Dorsolateral prefrontal cortex (tissue), 120 donors: ENCODE measurements at regions of chr12 and their contacts with region 1.

Region 1: GRCh38 chr12:74537707-74538385 is at the start of gene ATXN7L3B:
- DNase-seq: peak; percentile 81 to 95 (median 86)
- H3K4me3 ChIP-seq: peak within 1 kb of the TSS; percentile 65 to 100 (median 87)
- H3K27ac ChIP-seq: peak within 1 kb of the TSS; percentile 60 to 98 (median 94)
- H3K27me3 ChIP-seq: no peaks in the 10 kb centered on the region
- CTCF ChIP-seq: peak in 6 of 56 donors; percentile 3 to 12 (median 4)
- total RNA-seq, gene ATXN7L3B: 42.4 to 93.4 (median 69.5) TPM

Region 2: DNA sequence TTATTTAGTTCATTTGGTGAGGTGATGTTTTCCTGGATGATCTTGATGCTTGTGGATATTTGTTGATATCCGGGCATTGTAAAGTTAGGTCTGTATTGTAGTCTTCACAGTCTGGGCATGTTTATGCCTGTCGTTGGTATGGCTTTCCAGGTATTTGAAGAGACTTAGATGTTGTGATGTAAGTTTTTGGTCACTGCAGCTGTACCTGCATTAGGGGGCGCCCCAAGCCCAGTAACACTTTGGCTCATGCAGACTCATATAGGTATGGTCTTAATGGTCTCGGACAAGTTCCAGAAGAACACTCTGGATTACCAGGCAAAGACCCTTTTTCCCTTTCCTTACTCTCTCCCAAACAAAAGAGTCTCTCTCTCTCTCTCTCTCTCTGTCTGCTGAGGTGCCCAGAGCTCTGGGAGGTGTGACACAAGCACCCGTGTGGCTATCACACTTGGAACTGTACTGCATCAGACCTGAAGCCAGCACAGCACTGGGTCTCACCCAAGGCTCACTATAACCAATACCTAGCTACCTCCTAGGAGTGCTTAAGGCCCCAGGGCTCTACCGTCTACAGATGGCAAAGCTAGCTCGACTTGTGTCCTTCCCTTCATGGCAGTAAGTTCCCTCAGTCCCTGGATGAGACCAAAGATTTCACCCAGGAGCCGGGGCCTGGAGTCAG is 426.0 kb before region 1 on chr12:
- intact Hi-C with region 1: loop called in 1 of 2 experiments (anchors 10 kb)
- DNase-seq: peak in 4 of 10 donors; percentile 31 to 61 (median 46)
- H3K4me3 ChIP-seq: no peak overlapping the region
- H3K27ac ChIP-seq: no peak overlapping the region
- H3K27me3 ChIP-seq: no peaks in the 10 kb centered on the region
- CTCF ChIP-seq: peak in 49 of 56 donors; percentile 10 to 67 (median 42)

Region 3: DNA sequence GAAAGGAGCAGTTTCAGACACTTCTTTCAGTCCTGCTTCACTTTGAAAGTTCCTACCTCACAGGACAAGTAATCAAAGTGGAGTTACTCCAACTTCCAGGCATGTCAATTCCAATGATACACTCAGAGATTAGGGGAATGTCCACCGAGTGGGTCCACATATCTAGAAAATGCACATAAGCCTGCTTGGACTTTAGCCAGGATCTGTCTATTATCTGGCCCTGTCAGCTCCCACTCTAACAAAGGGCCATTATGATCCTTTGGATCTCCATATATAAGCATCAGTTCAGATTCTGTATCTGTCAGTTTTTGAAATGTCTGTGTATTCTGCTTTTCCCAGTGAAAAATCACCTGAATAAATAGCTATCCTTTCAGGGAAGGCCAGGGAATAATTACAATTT is 113.1 kb before region 1 on chr12:
- intact Hi-C with region 1: loop called (anchors 10 kb)
- DNase-seq: no peak
- H3K4me3 ChIP-seq: peak overlapping the region in 4 of 59 donors; percentile 16 to 26 (median 22)
- H3K27ac ChIP-seq: peak overlapping the region in 39 of 59 donors; percentile 1 to 81 (median 54)
- H3K27me3 ChIP-seq: no peaks in the 10 kb centered on the region
- CTCF ChIP-seq: no peak

Region 4: GRCh38 chr12:74584483-74585062 is 46.7 kb after region 1 on chr12:
- intact Hi-C with region 1: no loop called
- DNase-seq: no peak
- H3K4me3 ChIP-seq: no peak overlapping the region
- H3K27ac ChIP-seq: no peak overlapping the region
- H3K27me3 ChIP-seq: no peaks in the 10 kb centered on the region
- CTCF ChIP-seq: no peak

Region 5: DNA sequence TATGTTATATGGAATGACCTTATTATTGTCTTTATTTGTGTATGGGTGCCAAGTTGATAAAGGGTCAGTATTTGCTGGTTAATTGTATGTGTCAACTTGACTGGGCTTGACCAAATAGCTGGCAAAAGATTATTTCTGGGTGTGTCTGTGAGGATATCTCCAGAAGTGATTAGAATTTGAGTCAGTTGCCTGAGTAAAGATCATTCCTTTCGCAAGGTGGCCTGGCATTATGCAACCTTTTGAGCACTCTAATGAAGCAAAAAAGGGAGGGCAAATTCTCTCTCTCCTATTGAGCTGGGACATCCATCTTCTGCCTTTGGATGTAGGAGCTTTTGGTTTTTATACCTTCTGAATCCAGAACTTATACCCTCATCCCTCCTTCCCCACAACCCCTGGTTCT is 82.0 kb after region 1 on chr12:
- intact Hi-C with region 1: loop called in 1 of 2 experiments (anchors 10 kb)
- DNase-seq: no peak
- H3K4me3 ChIP-seq: no peak overlapping the region
- H3K27ac ChIP-seq: peak overlapping the region in 6 of 59 donors; percentile 4 to 83 (median 58)
- H3K27me3 ChIP-seq: no peaks in the 10 kb centered on the region
- CTCF ChIP-seq: no peak

Region 6: GRCh38 chr12:74646831-74647230 is 109.0 kb after region 1 on chr12:
- intact Hi-C with region 1: loop called (anchors 2 to 10 kb)
- DNase-seq: no peak
- H3K4me3 ChIP-seq: peak overlapping the region in 2 of 59 donors; percentile 1 to 20
- H3K27ac ChIP-seq: peak overlapping the region in 48 of 59 donors; percentile 3 to 82 (median 64)
- H3K27me3 ChIP-seq: no peaks in the 10 kb centered on the region
- CTCF ChIP-seq: peak in 55 of 56 donors; percentile 28 to 80 (median 59)

Region 7: GRCh38 chr12:75058228-75058627 is 520.4 kb after region 1 on chr12:
- intact Hi-C with region 1: no loop called
- DNase-seq: no peak
- H3K4me3 ChIP-seq: no peak overlapping the region
- H3K27ac ChIP-seq: no peak overlapping the region
- H3K27me3 ChIP-seq: no peaks in the 10 kb centered on the region
- CTCF ChIP-seq: no peak